PC-3 (cell line): ENCODE measurements at regions of chr17 and their contacts with region 1.

Region 1: GRCh38 chr17:77810536-77810935 is 148.0 kb upstream of the TNRC6C start:
- DNase-seq: peak; percentile 71
- ATAC-seq: peak; percentile 65
- H3K4me3 ChIP-seq: no peak overlapping the region
- H3K27ac ChIP-seq: no peak overlapping the region
- H3K4me1 ChIP-seq: peaks cover 10% of the 10 kb centered on the region; the same call in 1 of the 2 replicates
- H3K27me3 ChIP-seq: peaks cover 32% of the 10 kb centered on the region; the same call in 1 of the 2 replicates
- CTCF ChIP-seq: no peak

Region 2: DNA sequence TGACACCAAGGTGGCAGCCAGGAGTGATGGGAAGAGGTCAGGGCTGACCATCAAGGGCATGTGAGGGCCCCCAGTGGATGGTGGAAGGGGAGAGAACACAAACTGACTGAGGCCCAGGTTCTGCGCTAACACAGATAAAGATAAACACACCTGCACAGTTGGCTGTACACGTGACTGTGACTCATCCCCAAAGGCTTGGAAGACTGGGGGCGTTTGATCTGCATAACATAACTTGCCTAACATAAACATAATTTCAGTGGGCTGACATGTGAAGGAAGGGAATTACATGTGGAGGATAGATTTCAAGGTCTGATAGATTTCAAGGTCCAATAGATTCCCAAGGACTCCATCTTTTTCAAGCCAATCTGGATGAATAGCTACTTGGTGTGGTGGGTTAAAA is 47.1 kb after region 1 on chr17:
- CTCF ChIA-PET with region 1: no interaction called
- POLR2A ChIA-PET with region 1: no interaction called
- intact Hi-C with region 1: no loop called
- DNase-seq: no peak
- ATAC-seq: no peak
- H3K4me3 ChIP-seq: no peak overlapping the region
- H3K27ac ChIP-seq: no peak overlapping the region
- H3K4me1 ChIP-seq: no peaks in the 10 kb centered on the region
- H3K27me3 ChIP-seq: peaks cover 50% of the 10 kb centered on the region
- CTCF ChIP-seq: no peak

Region 3: GRCh38 chr17:77951171-77951570 is 140.6 kb after region 1 on chr17:
- CTCF ChIA-PET with region 1: interaction called, 13 read pairs
- POLR2A ChIA-PET with region 1: no interaction called
- intact Hi-C with region 1: no loop called
- DNase-seq: no peak
- ATAC-seq: no peak
- H3K4me3 ChIP-seq: no peak overlapping the region
- H3K27ac ChIP-seq: no peak overlapping the region
- H3K4me1 ChIP-seq: peaks cover 5% of the 10 kb centered on the region; the same call in 1 of the 2 replicates
- H3K27me3 ChIP-seq: peaks cover 77% of the 10 kb centered on the region
- CTCF ChIP-seq: no peak